ENCODE measurements at regions of chr11 and their contacts with region 1.

Region 1: DNA sequence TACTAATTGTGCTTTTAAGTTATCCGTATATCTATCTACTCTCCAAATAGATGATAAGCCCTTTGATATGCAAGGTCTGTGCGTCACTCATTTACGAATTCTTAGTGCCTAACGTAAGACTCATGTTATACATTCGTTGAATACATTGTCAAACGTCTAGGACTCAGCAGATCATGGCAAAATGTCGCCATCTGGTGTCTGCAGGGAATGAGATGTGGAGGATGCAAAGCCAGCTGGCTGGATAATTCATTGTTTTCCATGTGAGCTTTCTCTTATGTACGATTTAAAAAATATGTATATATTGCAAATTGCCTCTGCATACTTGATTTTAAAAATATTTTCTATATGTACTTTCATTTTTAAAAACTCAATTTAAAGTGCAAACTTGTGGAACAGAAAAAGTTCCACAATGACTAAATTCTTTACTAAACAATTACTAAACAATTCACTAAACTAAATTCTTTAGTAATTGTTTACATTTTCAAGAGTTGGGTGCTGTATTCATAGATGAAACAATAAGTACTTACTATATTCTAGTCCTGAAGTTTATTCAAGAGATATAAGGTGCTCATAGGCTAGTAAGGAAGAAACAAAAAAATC is 33.8 kb downstream of the ZNF202 start:
- DNase-seq: peak in 4 of 5 donors; percentile 33 to 45 (median 40)
- H3K4me3 ChIP-seq: no peak overlapping the region
- H3K4me3 Mint-ChIP-seq: no peak overlapping the region
- H3K27ac ChIP-seq: no peak overlapping the region
- H3K27ac Mint-ChIP-seq: no peak overlapping the region
- H3K4me1 ChIP-seq: no peaks in the 10 kb centered on the region
- H3K4me1 Mint-ChIP-seq: no peaks in the 10 kb centered on the region
- H3K27me3 ChIP-seq: no peaks in the 10 kb centered on the region
- H3K27me3 Mint-ChIP-seq: peaks cover under 1 to 7% of the 10 kb centered on the region in 2 donors

Region 2: DNA sequence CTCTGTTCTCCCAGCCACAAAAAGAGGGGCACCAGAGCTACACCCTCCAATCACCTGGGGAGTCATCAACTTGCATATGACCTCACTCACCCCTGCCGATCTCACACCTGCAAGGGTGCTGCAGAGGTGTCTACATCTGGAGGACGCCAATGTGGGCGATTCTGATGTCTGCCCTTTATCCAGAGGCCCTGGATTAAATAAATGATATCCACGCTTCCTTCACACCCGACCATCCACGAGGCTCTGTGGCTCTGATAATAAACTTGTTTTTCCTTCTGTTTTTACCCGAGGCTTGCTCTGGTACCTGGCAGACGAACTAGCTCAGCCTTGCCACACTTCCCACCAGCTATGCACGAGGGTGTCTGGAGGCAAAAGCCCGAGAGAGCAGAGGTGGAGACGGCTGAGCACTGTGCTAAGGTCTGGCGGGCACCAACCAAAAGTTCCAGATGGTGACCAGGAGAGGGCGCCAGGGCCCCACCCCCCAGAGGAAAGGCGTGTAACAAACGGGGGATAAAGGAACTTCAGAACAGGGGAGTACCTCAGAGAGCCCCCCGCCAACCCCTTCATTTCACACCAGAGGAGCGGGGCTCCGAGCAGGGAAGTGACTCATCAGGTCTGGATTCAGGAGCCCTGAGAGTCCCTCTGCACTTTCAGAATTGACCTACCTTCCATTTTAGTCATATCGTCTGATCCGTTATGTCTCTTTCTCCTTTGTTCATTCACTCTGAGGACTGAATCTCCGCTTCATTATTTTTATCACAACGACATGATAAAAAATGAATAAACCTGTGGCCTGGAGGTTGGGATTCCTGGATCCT is 66.8 kb before region 1 on chr11:
- CTCF ChIA-PET with region 1: interaction called, 12 read pairs
- POLR2A ChIA-PET with region 1: no interaction called
- intact Hi-C with region 1: loop called (anchors 1 kb)
- DNase-seq: peak; percentile 23 to 36 (median 29)
- H3K4me3 ChIP-seq: no peak overlapping the region
- H3K4me3 Mint-ChIP-seq: peak overlapping the region in 1 of 8 donors; percentile 29
- H3K27ac ChIP-seq: no peak overlapping the region
- H3K27ac Mint-ChIP-seq: no peak overlapping the region
- H3K4me1 ChIP-seq: no peaks in the 10 kb centered on the region
- H3K4me1 Mint-ChIP-seq: peaks cover 0 to 3% (median 1%) of the 10 kb centered on the region in 4 donors
- H3K27me3 ChIP-seq: no peaks in the 10 kb centered on the region
- H3K27me3 Mint-ChIP-seq: peaks cover 8 to 23% of the 10 kb centered on the region in 2 donors

Region 3: GRCh38 chr11:123741159-123742028 is 33.7 kb after region 1 on chr11 and contains the start of gene ZNF202:
- CTCF ChIA-PET with region 1: interaction called, 28 read pairs
- POLR2A ChIA-PET with region 1: no interaction called
- intact Hi-C with region 1: no loop called
- DNase-seq: peak; percentile 89 to 91 (median 89)
- H3K4me3 ChIP-seq: peak within 1 kb of the TSS; percentile 70 to 80
- H3K4me3 Mint-ChIP-seq: peak within 1 kb of the TSS; percentile 91 to 99 (median 98)
- H3K27ac ChIP-seq: peak within 1 kb of the TSS; percentile 69
- H3K27ac Mint-ChIP-seq: peak within 1 kb of the TSS; percentile 81 to 98 (median 96)
- H3K4me1 ChIP-seq: peaks cover 27% of the 10 kb centered on the region
- H3K4me1 Mint-ChIP-seq: peaks cover 27 to 55% (median 37%) of the 10 kb centered on the region in 4 donors
- H3K27me3 ChIP-seq: no peaks in the 10 kb centered on the region
- H3K27me3 Mint-ChIP-seq: peaks cover 0 to 3% of the 10 kb centered on the region in 2 donors
- total RNA-seq, gene ZNF202: 17.4 to 21.6 TPM

Measured in CD4-positive, alpha-beta memory T cell (primary cell).